Activated CD8-positive, alpha-beta T cell treated with anti-CD3 and anti-CD28 coated beads for 36 hours (primary cell): ENCODE measurements at regions of chr16 and their contacts with region 1.

Region 1: DNA sequence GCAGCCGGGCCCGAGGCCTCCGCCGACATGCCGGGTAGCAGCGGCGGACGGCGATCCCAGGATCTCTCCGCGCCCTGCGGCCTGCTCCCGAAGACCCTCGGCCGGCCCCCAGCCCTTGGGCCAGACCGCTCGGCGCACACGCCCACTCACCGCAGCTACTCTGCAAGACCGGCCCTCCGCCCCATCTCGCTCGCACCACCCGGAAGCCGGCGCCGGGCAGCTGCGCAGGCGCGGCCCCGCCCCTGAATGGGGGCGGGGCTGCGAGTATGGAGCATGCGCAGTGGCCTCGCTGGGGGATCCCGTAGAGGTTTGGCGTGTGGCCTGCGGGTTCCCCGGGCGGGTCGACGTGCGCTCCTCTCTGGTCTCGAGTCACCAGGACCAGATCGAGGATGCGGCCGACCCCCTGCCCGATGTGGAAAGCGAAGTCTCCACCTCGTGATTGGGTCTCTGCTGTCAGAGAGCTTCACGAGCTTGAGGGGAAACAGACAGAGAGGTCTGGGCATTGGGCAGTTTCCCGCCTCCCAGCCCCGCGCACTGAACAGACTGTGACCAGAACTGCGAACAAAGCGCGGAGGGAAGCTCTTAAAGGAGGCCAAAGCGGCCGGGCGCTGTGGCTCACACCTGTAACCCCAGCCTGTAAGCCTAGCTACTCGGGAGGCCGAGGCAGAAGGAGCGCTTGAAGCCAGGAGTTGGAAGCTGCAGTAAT is at the start of gene KCTD13:
- DNase-seq: peak; percentile 86
- ATAC-seq: peak; percentile 92
- H3K4me3 Mint-ChIP-seq: peak within 1 kb of the TSS; percentile 90
- H3K27ac Mint-ChIP-seq: peak within 1 kb of the TSS; percentile 97
- H3K4me1 Mint-ChIP-seq: peaks cover 36% of the 10 kb centered on the region
- H3K27me3 Mint-ChIP-seq: no peaks in the 10 kb centered on the region
- CTCF ChIP-seq: no peak
- total RNA-seq, gene KCTD13: 35.2 to 35.3 TPM

Region 2: GRCh38 chr16:29900102-29900887 is 25.9 kb before region 1 on chr16 and contains the start of gene ASPHD1:
- CTCF ChIA-PET with region 1: interaction called, 3 read pairs
- POLR2A ChIA-PET with region 1: interaction called, 16 read pairs
- intact Hi-C with region 1: no loop called
- DNase-seq: peak; percentile 71
- ATAC-seq: peak; percentile 91
- H3K4me3 Mint-ChIP-seq: peak within 1 kb of the TSS; percentile 67
- H3K27ac Mint-ChIP-seq: no peak within 1 kb of the TSS
- H3K4me1 Mint-ChIP-seq: peaks cover 12% of the 10 kb centered on the region
- H3K27me3 Mint-ChIP-seq: peaks cover 22% of the 10 kb centered on the region
- CTCF ChIP-seq: no peak
- total RNA-seq, gene ASPHD1: 2.0 to 2.1 TPM

Region 3: DNA sequence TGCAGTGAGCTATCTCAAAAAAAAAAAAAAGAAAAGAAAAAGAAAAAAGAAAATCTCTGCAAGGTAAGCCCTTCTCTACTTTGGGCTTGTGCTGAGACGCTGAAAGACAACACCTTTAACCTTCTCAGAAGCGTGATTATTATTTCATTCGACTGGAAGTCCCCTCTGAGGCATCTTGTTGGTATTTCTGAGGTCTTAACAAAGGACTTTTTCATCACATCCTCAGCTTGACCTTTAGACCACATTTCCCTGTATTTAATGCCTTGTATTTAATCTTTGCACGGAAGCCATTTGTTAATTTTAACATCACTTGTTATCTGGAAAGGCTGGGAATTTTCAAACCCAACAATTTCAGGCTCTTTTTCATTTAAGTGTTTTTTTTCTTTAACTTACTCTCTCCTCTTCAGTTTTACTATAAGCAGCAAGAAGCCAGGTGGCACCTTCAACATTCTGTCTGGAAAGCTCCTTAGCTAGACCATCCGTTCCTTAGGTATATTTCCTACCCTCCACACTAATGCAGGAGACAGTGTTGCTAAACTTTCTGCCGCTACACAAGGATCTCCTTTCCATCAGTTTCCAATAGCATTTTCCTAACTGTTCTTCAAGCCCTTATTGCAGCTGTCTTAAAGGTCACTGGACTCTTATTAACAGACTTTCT is 10.4 kb before region 1 on chr16:
- CTCF ChIA-PET with region 1: interaction called, 3 read pairs
- POLR2A ChIA-PET with region 1: interaction called, 18 read pairs
- intact Hi-C with region 1: no loop called
- DNase-seq: no peak
- ATAC-seq: peak; percentile 51
- H3K4me3 Mint-ChIP-seq: no peak overlapping the region
- H3K27ac Mint-ChIP-seq: peak overlapping the region; percentile 68
- H3K4me1 Mint-ChIP-seq: peaks cover 18% of the 10 kb centered on the region
- H3K27me3 Mint-ChIP-seq: no peaks in the 10 kb centered on the region
- CTCF ChIP-seq: no peak

Region 4: DNA sequence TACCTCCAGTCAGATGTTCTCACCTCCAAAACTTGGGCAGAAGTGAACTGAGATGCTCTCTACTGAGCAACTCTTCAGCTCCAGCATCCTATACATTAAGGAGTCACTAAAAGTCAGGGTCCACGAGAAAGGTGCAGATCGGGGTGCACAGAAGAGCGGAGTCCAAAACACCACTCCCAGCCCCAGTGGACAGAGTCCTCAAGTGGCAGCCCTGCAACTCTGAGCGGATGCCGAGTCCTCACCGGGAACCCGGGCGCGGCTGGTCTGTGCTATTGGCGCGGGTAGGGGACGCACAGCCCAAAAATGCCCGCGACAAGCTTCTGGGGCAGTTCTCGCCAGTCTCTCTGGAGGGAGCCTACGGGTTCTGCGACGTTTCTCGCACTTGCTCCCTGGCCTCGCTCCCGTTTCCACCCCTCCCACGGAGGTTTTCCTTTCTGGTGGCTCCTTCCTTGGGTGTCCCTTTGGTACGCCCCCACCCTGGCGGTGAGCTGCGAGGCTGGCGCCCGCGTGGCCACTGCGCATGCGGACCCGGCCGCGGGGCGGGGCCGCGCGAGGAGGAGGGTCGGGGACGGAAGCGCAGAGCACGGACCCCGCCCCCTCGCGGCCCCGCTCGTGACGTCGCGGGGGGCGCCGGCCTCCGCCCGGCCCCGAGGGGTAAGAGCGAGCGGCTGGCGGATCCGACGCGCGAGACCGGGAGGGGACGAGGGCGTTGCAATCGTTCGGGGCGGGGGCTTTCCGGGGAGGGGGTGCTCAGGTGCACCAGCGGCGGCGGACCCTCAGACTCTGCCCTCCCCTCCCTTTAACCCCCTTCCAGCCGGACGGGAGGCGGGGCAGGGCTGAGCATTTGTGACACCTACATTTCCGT is 35.6 kb after region 1 on chr16 and contains the start of gene TMEM219:
- CTCF ChIA-PET with region 1: interaction called, 5 read pairs
- POLR2A ChIA-PET with region 1: interaction called, 14 read pairs
- intact Hi-C with region 1: no loop called
- DNase-seq: peak; percentile 91
- ATAC-seq: peak; percentile 96
- H3K4me3 Mint-ChIP-seq: peak within 1 kb of the TSS; percentile 86
- H3K27ac Mint-ChIP-seq: peak within 1 kb of the TSS; percentile 87
- H3K4me1 Mint-ChIP-seq: peaks cover 19% of the 10 kb centered on the region
- H3K27me3 Mint-ChIP-seq: no peaks in the 10 kb centered on the region
- CTCF ChIP-seq: peak; percentile 23
- total RNA-seq, gene TMEM219: 31.9 to 34.9 TPM